Gastrocnemius medialis (tissue), 4 donors: ENCODE measurements at regions of chr17 and their contacts with region 1.

Region 1: GRCh38 chr17:4709794-4710692 is at the start of gene ARRB2:
- DNase-seq: peak; percentile 91 to 95
- ATAC-seq: peak; percentile 83 to 89
- H3K4me3 ChIP-seq: peak within 1 kb of the TSS; percentile 66 to 86 (median 75)
- H3K27ac ChIP-seq: peak within 1 kb of the TSS; percentile 78 to 94 (median 83)
- H3K4me1 ChIP-seq: peaks cover 13 to 19% of the 10 kb centered on the region in 2 donors
- H3K27me3 ChIP-seq: no peaks in the 10 kb centered on the region
- CTCF ChIP-seq: peak; percentile 49 to 68 (median 56)
- POLR2A ChIP-seq: peak in 1 of 2 donors; percentile 52
- total RNA-seq, gene ARRB2: 5.5 to 11.8 (median 7.8) TPM

Region 2: DNA sequence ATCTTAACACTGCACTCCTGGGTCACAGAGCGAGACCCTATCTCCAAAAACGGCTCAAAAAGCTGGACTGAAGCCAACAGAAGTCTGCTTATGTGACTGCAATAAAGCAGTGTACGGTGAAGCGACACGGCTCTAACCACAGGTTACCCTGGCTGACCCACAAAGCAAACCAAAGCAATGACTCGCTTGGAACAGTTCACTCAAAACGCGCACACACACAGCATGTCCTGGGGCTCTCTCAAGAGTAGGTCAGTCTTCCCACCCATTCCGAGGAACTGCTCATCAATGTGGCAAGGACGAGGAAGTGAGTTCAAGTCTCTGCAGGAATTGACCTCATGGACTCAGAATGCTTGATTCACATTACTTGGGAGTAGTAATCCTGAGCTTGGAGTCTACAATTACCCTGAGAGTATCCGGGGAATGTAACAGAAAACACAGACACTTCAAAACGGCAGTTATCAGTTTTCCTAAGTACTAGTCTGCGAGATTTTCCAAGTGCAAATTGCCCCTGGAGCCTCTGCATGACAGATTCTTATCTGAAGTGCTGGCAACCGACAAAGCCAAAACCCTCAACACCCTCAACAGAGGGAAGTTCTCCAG is 31.5 kb before region 1 on chr17:
- in situ Hi-C with region 1: no loop called
- intact Hi-C with region 1: no loop called
- DNase-seq: no peak
- ATAC-seq: no peak
- H3K4me3 ChIP-seq: no peak overlapping the region
- H3K27ac ChIP-seq: no peak overlapping the region
- H3K4me1 ChIP-seq: no peaks in the 10 kb centered on the region
- H3K27me3 ChIP-seq: no peaks in the 10 kb centered on the region
- CTCF ChIP-seq: no peak
- POLR2A ChIP-seq: no peak

Region 3: GRCh38 chr17:4733073-4733531 is 23.1 kb after region 1 on chr17:
- in situ Hi-C with region 1: no loop called
- intact Hi-C with region 1: loop called (anchors 1 kb)
- DNase-seq: no peak
- ATAC-seq: no peak
- H3K4me3 ChIP-seq: no peak overlapping the region
- H3K27ac ChIP-seq: no peak overlapping the region
- H3K4me1 ChIP-seq: peaks cover 0 to 12% of the 10 kb centered on the region in 2 donors
- H3K27me3 ChIP-seq: peaks cover under 1 to 5% (median 2%) of the 10 kb centered on the region in 3 donors
- CTCF ChIP-seq: no peak
- POLR2A ChIP-seq: no peak

Region 4: GRCh38 chr17:4771519-4772234 is 61.6 kb after region 1 on chr17 and contains the start of gene TM4SF5:
- in situ Hi-C with region 1: no loop called
- intact Hi-C with region 1: no loop called
- DNase-seq: no peak
- ATAC-seq: no peak
- H3K4me3 ChIP-seq: no peak within 1 kb of the TSS
- H3K27ac ChIP-seq: no peak within 1 kb of the TSS
- H3K4me1 ChIP-seq: no peaks in the 10 kb centered on the region
- H3K27me3 ChIP-seq: peaks cover 8 to 12% (median 10%) of the 10 kb centered on the region in 3 donors
- CTCF ChIP-seq: no peak
- POLR2A ChIP-seq: no peak
- total RNA-seq, gene TM4SF5: 0.64 TPM in 1 of 4 donors, not detected in the others

Region 5: GRCh38 chr17:4806777-4807604 is 96.9 kb after region 1 on chr17 and contains the start of gene PLD2:
- in situ Hi-C with region 1: no loop called
- intact Hi-C with region 1: loop called (anchors 5 kb)
- DNase-seq: peak; percentile 65 to 70
- ATAC-seq: peak; percentile 94 to 95
- H3K4me3 ChIP-seq: peak within 1 kb of the TSS; percentile 76 to 97 (median 81)
- H3K27ac ChIP-seq: peak within 1 kb of the TSS; percentile 70 to 81 (median 76)
- H3K4me1 ChIP-seq: peaks cover 9 to 23% of the 10 kb centered on the region in 2 donors
- H3K27me3 ChIP-seq: no peaks in the 10 kb centered on the region
- CTCF ChIP-seq: no peak
- POLR2A ChIP-seq: peak; percentile 34 to 50
- total RNA-seq, gene PLD2: 2.8 to 5.8 (median 4.2) TPM

Region 6: DNA sequence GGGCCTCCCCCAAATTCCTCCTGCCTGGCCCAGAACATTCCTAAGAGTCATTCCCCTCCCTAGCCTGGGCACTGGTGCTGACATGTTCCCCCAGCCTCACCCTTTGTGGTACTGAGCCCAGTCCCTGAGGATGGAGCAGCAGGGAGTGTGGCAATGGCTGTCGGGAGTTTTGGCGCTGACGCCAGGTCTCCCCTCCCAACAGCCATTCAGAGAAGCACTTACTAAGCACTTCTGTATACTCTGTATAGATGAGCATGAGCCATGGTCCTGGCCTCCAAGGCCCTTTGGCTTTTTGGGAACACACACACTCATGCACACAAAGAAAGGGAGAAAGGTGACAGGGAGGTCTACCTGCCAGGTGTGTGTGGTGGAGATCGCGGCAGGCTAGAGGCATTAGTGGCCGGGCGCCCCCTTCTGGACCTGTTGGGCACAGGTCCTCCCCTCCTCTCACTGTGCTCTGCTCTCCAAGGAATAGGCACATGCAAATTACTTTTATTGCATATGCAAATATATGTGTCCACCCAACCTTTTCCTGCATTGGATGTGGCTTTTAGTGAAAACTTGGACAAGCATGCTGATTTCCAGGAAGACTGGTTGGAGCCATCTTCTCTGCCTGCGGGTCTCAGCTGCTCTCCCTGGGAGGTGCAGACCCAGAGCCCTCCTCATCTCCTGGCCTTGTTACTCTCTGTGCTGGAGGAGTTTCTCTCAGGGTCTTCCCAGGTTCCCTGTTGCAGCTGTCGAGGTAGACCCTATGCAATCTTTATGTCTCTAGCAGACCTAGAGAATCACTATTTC is 171.9 kb after region 1 on chr17:
- in situ Hi-C with region 1: loop called in 1 of 4 experiments (anchors 10 kb)
- intact Hi-C with region 1: loop called (anchors 5 kb)
- DNase-seq: no peak
- ATAC-seq: peak in 1 of 2 donors; percentile 53
- H3K4me3 ChIP-seq: no peak overlapping the region
- H3K27ac ChIP-seq: no peak overlapping the region
- H3K4me1 ChIP-seq: no peaks in the 10 kb centered on the region
- H3K27me3 ChIP-seq: no peaks in the 10 kb centered on the region
- CTCF ChIP-seq: peak; percentile 54 to 82 (median 68)
- POLR2A ChIP-seq: no peak

Region 7: DNA sequence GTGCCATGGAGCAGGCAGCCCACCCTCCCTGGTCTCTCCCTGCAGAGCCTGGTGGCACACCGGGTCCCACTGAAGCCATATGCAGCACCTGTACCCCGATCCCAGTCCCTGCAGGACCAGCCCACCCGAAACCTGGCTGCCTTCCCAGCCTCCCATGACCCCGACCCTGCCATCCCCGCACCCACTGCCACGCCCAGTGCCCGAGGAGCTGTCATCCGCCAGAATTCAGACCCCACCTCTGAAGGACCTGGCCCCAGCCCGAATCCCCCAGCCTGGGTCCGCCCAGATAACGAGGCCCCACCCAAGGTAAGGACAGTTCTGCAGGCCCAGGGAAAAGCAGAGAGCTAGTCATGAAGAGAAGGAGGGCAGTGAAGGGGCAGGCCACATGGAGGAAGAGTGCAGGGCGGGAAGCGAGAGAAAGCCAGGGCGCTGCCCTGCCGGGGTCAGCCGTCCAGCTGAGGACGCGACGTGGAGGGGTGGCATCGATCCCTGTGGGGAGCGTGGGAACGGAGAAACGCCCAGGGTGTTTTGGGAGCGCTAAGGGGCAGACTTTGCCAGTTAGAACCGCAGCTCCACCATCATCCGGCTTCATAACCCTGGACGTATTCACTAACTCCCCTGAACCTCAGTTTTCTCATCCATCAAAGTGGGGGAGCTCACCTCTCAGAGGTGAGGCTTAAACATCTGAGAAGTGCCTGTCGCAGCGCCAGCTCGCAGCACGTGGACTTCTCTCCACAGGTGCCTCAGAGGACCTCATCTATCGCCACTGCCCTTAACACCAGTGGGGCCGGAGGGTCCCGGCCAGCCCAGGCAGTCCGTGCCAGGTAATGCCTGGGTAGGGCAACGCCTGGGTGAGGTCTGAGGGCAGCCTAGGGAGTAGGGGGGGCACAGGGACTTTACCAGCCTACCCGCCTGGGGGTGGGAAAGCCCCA is 181.6 kb after region 1 on chr17:
- in situ Hi-C with region 1: loop called in 1 of 4 experiments (anchors 10 kb)
- intact Hi-C with region 1: loop called (anchors 5 kb)
- DNase-seq: no peak
- ATAC-seq: no peak
- H3K4me3 ChIP-seq: no peak overlapping the region
- H3K27ac ChIP-seq: no peak overlapping the region
- H3K4me1 ChIP-seq: no peaks in the 10 kb centered on the region
- H3K27me3 ChIP-seq: no peaks in the 10 kb centered on the region
- CTCF ChIP-seq: no peak
- POLR2A ChIP-seq: no peak